Activated B cell treated with CpG ODN at 0.5 μM for 24 hours (primary cell): ENCODE measurements at regions of chr1 and their contacts with region 1.

Region 1: DNA sequence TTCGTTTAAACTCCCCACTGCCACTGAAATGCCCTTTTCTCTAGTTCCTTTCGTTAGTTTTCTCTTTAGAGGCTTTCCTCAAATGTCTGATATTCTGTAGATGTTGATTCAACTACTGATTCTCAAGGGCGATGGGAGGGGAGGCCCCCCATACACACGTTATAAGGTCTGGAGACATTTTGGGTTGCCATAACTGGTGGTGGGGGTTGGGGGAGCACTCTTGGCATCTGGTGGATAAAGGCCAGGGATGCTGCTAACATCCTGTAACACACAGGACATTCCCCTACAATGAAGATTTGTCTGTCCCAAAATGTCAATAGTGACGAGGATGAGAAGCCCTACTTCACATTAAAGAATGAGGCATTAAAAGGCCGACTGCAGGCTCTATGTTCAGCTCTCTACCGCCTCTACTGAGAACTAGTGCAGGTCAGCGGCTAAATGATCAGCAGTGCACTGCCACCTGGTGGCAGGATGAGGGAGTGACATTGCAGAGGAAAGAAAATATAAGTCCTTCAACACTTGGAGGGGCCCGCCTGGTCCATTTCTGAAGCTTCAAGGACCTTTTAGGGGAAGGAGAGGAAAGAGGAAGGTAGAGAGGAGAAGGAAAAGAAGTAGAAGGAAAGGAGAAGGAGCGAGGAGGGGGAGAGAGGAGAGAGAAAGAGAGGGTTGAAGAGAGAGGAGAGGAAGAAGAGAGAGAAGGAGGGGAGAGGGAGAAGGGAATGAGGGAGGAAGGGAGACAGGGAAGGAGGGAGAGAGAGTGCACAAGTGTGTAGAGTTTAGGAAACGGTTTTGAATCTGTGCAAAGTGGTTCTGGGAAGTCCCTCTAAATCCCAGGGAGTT is 29.4 kb downstream of the ALG14 start:
- DNase-seq: peak; percentile 65
- ATAC-seq: peak; percentile 98
- H3K4me3 Mint-ChIP-seq: no peak overlapping the region
- H3K27ac Mint-ChIP-seq: no peak overlapping the region
- H3K4me1 Mint-ChIP-seq: no peaks in the 10 kb centered on the region
- H3K27me3 Mint-ChIP-seq: no peaks in the 10 kb centered on the region
- CTCF ChIP-seq: peak; percentile 97

Region 2: DNA sequence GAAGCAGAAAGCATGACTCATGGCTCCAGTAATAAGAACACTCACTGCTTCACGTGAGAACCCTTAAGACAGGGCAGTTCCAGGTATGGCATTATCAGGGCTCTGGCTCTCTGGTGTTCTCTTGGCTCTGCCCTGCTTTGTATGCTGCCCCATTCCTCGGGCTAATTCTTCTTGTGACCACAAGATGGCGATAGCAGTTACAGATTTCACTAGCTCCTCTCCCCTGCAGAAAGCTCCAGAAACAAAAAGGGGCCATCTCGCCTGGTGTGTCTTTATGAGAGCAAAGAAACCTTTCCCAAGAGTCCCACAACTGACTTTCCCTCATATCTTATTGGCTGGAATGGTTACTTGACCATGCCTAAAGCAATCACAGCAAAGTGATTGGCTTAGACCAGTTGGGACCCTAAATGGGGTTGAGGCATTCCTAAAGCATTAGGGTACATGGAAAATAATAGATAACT is 561.9 kb before region 1 on chr1:
- CTCF ChIA-PET with region 1: interaction called, 4 read pairs
- POLR2A ChIA-PET with region 1: no interaction called
- intact Hi-C with region 1: loop called (anchors 5 kb)
- DNase-seq: no peak
- ATAC-seq: peak; percentile 71
- H3K4me3 Mint-ChIP-seq: no peak overlapping the region
- H3K27ac Mint-ChIP-seq: no peak overlapping the region
- H3K4me1 Mint-ChIP-seq: no peaks in the 10 kb centered on the region
- H3K27me3 Mint-ChIP-seq: no peaks in the 10 kb centered on the region
- CTCF ChIP-seq: peak; percentile 66

Region 3: GRCh38 chr1:94522304-94522703 is 521.1 kb before region 1 on chr1:
- CTCF ChIA-PET with region 1: no interaction called
- POLR2A ChIA-PET with region 1: no interaction called
- intact Hi-C with region 1: loop called (anchors 5 kb)
- DNase-seq: no peak
- ATAC-seq: no peak
- H3K4me3 Mint-ChIP-seq: no peak overlapping the region
- H3K27ac Mint-ChIP-seq: no peak overlapping the region
- H3K4me1 Mint-ChIP-seq: no peaks in the 10 kb centered on the region
- H3K27me3 Mint-ChIP-seq: peaks cover 4% of the 10 kb centered on the region
- CTCF ChIP-seq: no peak

Region 4: GRCh38 chr1:94854458-94855306 is 188.7 kb before region 1 on chr1:
- CTCF ChIA-PET with region 1: interaction called, 183 read pairs
- POLR2A ChIA-PET with region 1: interaction called, 14 read pairs
- intact Hi-C with region 1: loop called (anchors 1 kb)
- DNase-seq: peak; percentile 54
- ATAC-seq: peak; percentile 98
- H3K4me3 Mint-ChIP-seq: no peak overlapping the region
- H3K27ac Mint-ChIP-seq: no peak overlapping the region
- H3K4me1 Mint-ChIP-seq: no peaks in the 10 kb centered on the region
- H3K27me3 Mint-ChIP-seq: peaks cover 8% of the 10 kb centered on the region
- CTCF ChIP-seq: no peak

Region 5: DNA sequence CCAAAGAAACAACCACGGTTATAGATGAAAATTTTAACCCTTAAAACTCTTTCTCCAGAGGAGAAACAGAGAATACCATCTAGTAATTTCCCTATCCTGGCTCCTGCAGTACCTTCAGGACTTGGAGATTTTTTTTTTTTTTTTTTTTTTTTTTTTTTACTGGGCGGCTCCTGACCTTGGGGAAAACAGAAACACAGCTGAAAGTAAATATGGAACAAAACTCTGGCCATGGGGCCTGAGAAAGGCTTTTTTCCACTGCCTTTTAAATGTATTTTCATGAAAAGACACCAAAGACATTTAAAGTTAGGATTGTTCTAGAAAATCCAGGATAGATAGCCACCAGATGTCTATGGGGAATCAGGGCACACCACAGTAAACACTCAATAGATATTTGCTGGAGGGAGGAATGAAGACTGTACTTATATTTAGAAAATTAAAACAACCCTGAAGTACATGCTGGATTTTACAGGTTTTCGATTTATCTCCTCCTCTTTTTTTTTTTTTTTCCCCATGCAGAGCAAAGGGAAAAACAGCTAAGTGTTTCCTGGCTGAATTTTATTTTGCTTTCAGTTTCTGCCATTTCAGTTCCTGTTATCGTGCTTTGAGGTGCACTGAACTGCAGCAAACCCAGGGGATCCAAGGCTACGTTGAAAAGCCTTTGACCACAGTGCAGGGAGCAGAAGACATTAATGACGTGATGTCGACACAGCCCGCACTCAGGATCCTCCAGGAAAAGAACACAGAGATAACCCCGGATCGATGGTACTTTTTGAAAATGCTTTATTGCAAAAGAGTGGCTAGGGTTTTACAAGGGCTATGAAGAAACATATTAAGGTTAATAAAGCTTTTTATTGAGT is 80.7 kb before region 1 on chr1:
- CTCF ChIA-PET with region 1: no interaction called
- POLR2A ChIA-PET with region 1: no interaction called
- intact Hi-C with region 1: loop called (anchors 2 kb)
- DNase-seq: peak; percentile 17
- ATAC-seq: peak; percentile 96
- H3K4me3 Mint-ChIP-seq: peak overlapping the region; percentile 84
- H3K27ac Mint-ChIP-seq: peak overlapping the region; percentile 94
- H3K4me1 Mint-ChIP-seq: peaks cover 29% of the 10 kb centered on the region
- H3K27me3 Mint-ChIP-seq: no peaks in the 10 kb centered on the region
- CTCF ChIP-seq: no peak

Region 6: DNA sequence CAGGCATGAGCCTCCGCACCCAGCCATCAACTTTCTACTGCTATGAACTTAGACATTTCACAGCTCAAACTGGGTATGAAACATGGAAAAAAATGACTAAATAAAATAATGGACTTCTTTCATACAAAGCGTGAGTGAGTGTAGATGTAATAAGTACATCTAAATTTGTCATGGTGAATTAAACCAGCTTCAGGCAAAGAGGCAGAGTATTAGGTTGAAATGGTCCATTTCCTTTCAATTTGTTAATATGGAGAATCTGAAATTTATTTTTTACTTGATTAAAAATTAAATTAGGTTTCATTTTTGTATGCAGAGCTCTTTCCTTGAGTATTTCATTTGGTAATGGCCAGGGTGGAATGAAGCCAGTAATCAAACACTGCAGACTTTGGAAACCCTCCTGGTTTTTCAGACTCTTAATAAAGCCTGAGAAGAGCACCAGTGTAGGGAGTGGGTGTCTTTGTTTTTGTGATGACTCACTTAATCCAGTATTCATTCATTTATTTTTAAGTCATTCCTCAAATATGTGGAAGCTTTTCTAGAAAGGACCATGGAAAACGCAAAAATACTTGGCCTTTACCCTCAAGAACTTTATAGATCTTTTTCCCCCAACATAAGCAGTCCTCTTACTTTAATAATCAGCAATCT is 19.8 kb before region 1 on chr1:
- CTCF ChIA-PET with region 1: no interaction called
- POLR2A ChIA-PET with region 1: no interaction called
- intact Hi-C with region 1: no loop called
- DNase-seq: no peak
- ATAC-seq: no peak
- H3K4me3 Mint-ChIP-seq: no peak overlapping the region
- H3K27ac Mint-ChIP-seq: no peak overlapping the region
- H3K4me1 Mint-ChIP-seq: no peaks in the 10 kb centered on the region
- H3K27me3 Mint-ChIP-seq: no peaks in the 10 kb centered on the region
- CTCF ChIP-seq: no peak

Region 7: GRCh38 chr1:95072532-95073419 is 29.4 kb after region 1 on chr1 and contains the start of gene ALG14:
- CTCF ChIA-PET with region 1: interaction called, 5 read pairs
- POLR2A ChIA-PET with region 1: no interaction called
- intact Hi-C with region 1: loop called (anchors 2 kb)
- DNase-seq: peak; percentile 88
- ATAC-seq: peak; percentile 96
- H3K4me3 Mint-ChIP-seq: peak within 1 kb of the TSS; percentile 100
- H3K27ac Mint-ChIP-seq: peak within 1 kb of the TSS; percentile 99
- H3K4me1 Mint-ChIP-seq: peaks cover 20% of the 10 kb centered on the region
- H3K27me3 Mint-ChIP-seq: peaks cover 3% of the 10 kb centered on the region
- CTCF ChIP-seq: no peak
- total RNA-seq, gene ALG14: 3.7 and 7.5 TPM in 2 replicates